Activated B cell treated with CpG ODN at 0.5 μM for 24 hours (primary cell): ENCODE measurements at regions of chr20 and their contacts with region 1.

Region 1: DNA sequence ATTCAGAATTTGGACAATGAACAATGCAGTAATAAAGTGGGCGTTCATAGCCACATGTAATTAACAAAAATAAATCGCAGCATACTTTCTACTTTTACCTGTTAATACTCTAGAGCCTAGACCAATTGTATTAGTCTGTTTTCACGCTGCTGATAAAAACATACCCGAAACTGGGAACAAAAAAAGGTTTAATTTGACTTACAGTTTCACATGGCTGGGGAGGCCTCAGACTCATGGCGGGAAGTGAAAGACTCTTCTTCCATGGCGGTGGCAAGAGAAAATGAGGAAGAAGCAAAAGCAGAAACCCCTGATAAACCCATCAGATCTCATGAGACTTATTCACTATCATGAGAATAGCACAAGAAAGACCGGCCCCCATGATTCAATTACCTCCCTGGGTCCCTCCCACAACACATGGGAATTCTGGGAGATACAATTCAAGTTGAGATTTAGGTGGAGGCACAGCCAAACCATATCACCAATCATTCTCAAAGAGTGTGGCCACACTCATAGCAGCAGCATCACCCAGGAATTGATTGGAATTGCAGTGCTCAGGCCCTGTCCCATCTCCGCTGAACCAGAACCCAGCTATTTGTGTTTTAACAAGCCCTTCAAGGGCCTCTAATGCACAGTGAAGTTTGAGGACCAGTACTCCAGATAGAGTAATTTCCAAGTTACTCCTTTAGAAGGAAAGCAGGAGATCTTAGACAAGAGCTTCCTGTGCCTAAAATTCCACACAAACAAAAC is 650.0 kb downstream of the KIF16B start:
- DNase-seq: peak; percentile 24
- ATAC-seq: peak; percentile 74
- H3K4me3 Mint-ChIP-seq: peak overlapping the region; percentile 78
- H3K27ac Mint-ChIP-seq: peak overlapping the region; percentile 96
- H3K4me1 Mint-ChIP-seq: peaks cover 74% of the 10 kb centered on the region
- H3K27me3 Mint-ChIP-seq: no peaks in the 10 kb centered on the region
- CTCF ChIP-seq: no peak

Region 2: DNA sequence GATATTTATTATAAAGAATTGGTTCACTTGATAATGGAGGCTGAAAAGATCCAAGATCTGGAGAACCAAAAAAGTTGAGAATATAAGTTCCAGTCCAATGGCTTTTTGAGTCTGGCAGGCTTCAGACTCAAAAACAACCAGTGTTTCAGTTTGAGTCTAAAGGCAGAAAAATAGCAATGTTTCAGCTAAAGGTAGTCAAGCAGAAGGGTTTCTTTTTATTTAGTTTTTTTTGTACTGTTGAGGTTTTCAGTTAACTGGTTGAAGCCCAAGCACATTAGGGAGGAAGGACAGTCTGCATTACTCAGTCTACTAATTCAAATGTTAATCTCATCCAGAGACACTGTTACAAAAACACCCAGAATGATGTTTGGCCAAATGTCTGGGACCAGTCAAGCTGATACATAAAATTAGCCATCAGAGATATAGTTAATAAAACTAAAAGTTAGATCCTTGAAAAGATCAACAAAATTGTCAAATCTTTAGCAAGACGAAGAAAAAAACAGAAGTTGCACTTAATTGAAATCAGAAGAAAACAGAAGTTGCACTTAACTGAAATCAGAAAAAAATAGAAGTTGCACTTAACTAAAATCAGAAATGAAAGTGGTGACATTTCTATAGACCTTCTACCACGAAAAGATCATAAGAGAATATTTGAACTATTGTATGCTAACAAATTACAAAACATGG is 605.5 kb before region 1 on chr20:
- CTCF ChIA-PET with region 1: no interaction called
- POLR2A ChIA-PET with region 1: no interaction called
- intact Hi-C with region 1: loop called (anchors 5 kb)
- DNase-seq: no peak
- ATAC-seq: peak; percentile 91
- H3K4me3 Mint-ChIP-seq: peak overlapping the region; percentile 69
- H3K27ac Mint-ChIP-seq: peak overlapping the region; percentile 88
- H3K4me1 Mint-ChIP-seq: peaks cover 64% of the 10 kb centered on the region
- H3K27me3 Mint-ChIP-seq: no peaks in the 10 kb centered on the region
- CTCF ChIP-seq: no peak

Region 3: GRCh38 chr20:15726416-15726815 is 196.8 kb before region 1 on chr20:
- CTCF ChIA-PET with region 1: no interaction called
- POLR2A ChIA-PET with region 1: no interaction called
- intact Hi-C with region 1: no loop called
- DNase-seq: no peak
- ATAC-seq: no peak
- H3K4me3 Mint-ChIP-seq: no peak overlapping the region
- H3K27ac Mint-ChIP-seq: no peak overlapping the region
- H3K4me1 Mint-ChIP-seq: no peaks in the 10 kb centered on the region
- H3K27me3 Mint-ChIP-seq: no peaks in the 10 kb centered on the region
- CTCF ChIP-seq: no peak

Region 4: DNA sequence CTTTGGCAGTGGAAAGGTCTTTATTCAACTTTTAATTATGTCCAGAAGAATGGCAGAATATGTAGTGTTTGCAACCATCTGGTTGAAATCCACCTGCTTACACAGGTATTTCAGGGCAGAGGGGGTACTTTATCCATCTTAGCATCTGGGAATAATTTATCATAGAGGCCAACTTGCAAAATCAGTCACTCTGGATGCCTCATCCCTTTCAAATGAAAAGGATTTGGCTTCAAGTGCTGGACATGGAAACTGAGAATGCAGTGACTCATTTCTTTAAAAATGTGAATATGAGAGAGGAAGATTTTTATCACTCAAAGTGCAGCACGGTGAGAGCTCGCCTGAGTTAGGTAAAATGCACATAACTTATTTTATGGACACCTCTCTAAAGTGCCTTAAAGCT is 108.3 kb before region 1 on chr20:
- CTCF ChIA-PET with region 1: no interaction called
- POLR2A ChIA-PET with region 1: no interaction called
- intact Hi-C with region 1: no loop called
- DNase-seq: no peak
- ATAC-seq: no peak
- H3K4me3 Mint-ChIP-seq: no peak overlapping the region
- H3K27ac Mint-ChIP-seq: no peak overlapping the region
- H3K4me1 Mint-ChIP-seq: peaks cover 9% of the 10 kb centered on the region
- H3K27me3 Mint-ChIP-seq: no peaks in the 10 kb centered on the region
- CTCF ChIP-seq: no peak

Region 5: GRCh38 chr20:15842872-15843271 is 80.3 kb before region 1 on chr20:
- CTCF ChIA-PET with region 1: interaction called, 5 read pairs
- POLR2A ChIA-PET with region 1: no interaction called
- intact Hi-C with region 1: loop called (anchors 2 kb)
- DNase-seq: no peak
- ATAC-seq: peak; percentile 90
- H3K4me3 Mint-ChIP-seq: no peak overlapping the region
- H3K27ac Mint-ChIP-seq: peak overlapping the region; percentile 21
- H3K4me1 Mint-ChIP-seq: peaks cover 13% of the 10 kb centered on the region
- H3K27me3 Mint-ChIP-seq: no peaks in the 10 kb centered on the region
- CTCF ChIP-seq: no peak

Region 6: GRCh38 chr20:15875446-15875845 is 47.8 kb before region 1 on chr20:
- CTCF ChIA-PET with region 1: no interaction called
- POLR2A ChIA-PET with region 1: no interaction called
- intact Hi-C with region 1: loop called (anchors 5 kb)
- DNase-seq: no peak
- ATAC-seq: peak; percentile 89
- H3K4me3 Mint-ChIP-seq: peak overlapping the region; percentile 62
- H3K27ac Mint-ChIP-seq: peak overlapping the region; percentile 65
- H3K4me1 Mint-ChIP-seq: peaks cover 37% of the 10 kb centered on the region
- H3K27me3 Mint-ChIP-seq: no peaks in the 10 kb centered on the region
- CTCF ChIP-seq: no peak

Region 7: DNA sequence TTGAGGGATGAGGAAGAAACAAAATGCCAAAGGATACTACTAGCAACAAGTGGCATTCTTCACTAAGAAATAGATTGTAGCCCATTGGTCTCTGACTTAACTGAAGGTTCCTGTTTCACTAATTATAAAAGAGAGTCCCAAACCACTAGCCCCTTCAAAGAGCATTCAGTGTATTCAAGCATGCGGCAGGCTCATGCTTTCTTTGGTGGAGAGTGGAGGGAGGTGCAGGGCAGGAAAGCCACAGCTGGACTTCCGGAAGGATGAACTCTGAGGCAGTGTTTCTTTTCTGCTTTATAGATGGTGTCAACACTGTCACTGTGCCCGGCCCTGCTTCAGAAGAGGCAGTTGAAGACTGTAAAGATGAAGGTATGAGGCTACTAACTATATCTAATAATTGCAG is 14.0 kb after region 1 on chr20:
- CTCF ChIA-PET with region 1: no interaction called
- POLR2A ChIA-PET with region 1: interaction called, 3 read pairs
- intact Hi-C with region 1: loop called (anchors 1 kb)
- DNase-seq: peak; percentile 17
- ATAC-seq: peak; percentile 90
- H3K4me3 Mint-ChIP-seq: peak overlapping the region; percentile 75
- H3K27ac Mint-ChIP-seq: peak overlapping the region; percentile 86
- H3K4me1 Mint-ChIP-seq: peaks cover 61% of the 10 kb centered on the region
- H3K27me3 Mint-ChIP-seq: no peaks in the 10 kb centered on the region
- CTCF ChIP-seq: no peak

Region 8: GRCh38 chr20:16028923-16029322 is 105.7 kb after region 1 on chr20:
- CTCF ChIA-PET with region 1: no interaction called
- POLR2A ChIA-PET with region 1: no interaction called
- intact Hi-C with region 1: no loop called
- DNase-seq: no peak
- ATAC-seq: peak; percentile 88
- H3K4me3 Mint-ChIP-seq: peak overlapping the region; percentile 46
- H3K27ac Mint-ChIP-seq: peak overlapping the region; percentile 72
- H3K4me1 Mint-ChIP-seq: peaks cover 68% of the 10 kb centered on the region
- H3K27me3 Mint-ChIP-seq: no peaks in the 10 kb centered on the region
- CTCF ChIP-seq: no peak

Region 9: GRCh38 chr20:16158090-16158975 is 235.1 kb after region 1 on chr20:
- CTCF ChIA-PET with region 1: no interaction called
- POLR2A ChIA-PET with region 1: no interaction called
- intact Hi-C with region 1: loop called (anchors 1 kb)
- DNase-seq: peak; percentile 48
- ATAC-seq: peak; percentile 85
- H3K4me3 Mint-ChIP-seq: peak overlapping the region; percentile 81
- H3K27ac Mint-ChIP-seq: peak overlapping the region; percentile 96
- H3K4me1 Mint-ChIP-seq: peaks cover 66% of the 10 kb centered on the region
- H3K27me3 Mint-ChIP-seq: no peaks in the 10 kb centered on the region
- CTCF ChIP-seq: no peak